Activated CD4-positive, alpha-beta T cell treated with anti-CD3 and anti-CD28 coated beads for 36 hours (primary cell): ENCODE measurements at regions of chr9 and their contacts with region 1.

Region 1: DNA sequence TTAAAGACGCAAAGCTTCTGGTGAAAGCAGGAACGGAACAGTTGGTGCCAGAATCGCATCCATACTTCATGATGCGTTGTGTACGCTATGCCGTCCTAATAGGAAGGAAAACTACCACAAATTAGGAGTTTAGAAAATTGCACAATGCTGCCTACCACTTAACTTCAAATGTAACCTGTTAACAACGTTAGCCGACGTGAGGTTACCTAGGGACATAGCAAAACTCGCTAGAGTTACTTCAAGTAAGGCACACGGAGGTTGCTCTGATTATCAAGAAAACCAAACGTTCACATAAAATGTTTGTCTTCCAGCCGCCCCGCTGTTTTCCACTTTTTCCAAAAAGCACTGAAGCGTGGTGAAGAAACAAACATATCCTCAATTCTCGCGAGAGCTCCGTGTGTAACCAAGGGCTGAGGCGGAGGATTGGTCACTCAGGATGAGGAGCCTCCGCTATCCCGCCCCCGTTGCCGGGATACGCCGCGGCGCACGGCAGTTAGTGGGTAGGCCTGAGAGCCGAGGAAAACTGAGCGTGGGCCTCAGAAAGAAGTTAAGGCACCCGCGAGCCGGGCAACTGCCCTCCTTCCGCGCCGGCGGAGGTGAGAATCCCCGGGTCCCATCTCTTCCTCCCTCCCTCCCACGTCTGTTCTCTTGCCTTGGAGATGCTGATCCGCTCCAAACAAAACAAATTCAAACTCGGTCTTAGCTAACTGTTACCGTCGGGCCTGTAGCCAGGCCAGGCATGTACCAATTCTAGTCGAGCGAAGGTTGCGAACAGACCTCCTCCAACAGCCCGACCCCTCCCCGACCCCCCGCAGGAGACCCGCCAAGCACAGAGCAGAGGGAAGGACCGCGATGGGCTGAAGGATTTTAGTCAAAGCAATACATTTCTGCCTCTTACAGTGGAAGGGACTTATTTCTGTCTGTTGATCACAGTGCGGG is at the start of gene IFT74:
- DNase-seq: peak; percentile 96
- ATAC-seq: peak; percentile 99
- H3K4me3 Mint-ChIP-seq: peak within 1 kb of the TSS; percentile 88
- H3K27ac Mint-ChIP-seq: peak within 1 kb of the TSS; percentile 85
- H3K4me1 Mint-ChIP-seq: peaks cover 32% of the 10 kb centered on the region
- H3K27me3 Mint-ChIP-seq: no peaks in the 10 kb centered on the region
- total RNA-seq, gene IFT74: 10.5 to 11.6 TPM

Region 2: GRCh38 chr9:26919698-26920097 is 36.5 kb before region 1 on chr9:
- CTCF ChIA-PET with region 1: no interaction called
- POLR2A ChIA-PET with region 1: no interaction called
- intact Hi-C with region 1: no loop called
- DNase-seq: no peak
- ATAC-seq: no peak
- H3K4me3 Mint-ChIP-seq: no peak overlapping the region
- H3K27ac Mint-ChIP-seq: no peak overlapping the region
- H3K4me1 Mint-ChIP-seq: no peaks in the 10 kb centered on the region
- H3K27me3 Mint-ChIP-seq: no peaks in the 10 kb centered on the region

Region 3: DNA sequence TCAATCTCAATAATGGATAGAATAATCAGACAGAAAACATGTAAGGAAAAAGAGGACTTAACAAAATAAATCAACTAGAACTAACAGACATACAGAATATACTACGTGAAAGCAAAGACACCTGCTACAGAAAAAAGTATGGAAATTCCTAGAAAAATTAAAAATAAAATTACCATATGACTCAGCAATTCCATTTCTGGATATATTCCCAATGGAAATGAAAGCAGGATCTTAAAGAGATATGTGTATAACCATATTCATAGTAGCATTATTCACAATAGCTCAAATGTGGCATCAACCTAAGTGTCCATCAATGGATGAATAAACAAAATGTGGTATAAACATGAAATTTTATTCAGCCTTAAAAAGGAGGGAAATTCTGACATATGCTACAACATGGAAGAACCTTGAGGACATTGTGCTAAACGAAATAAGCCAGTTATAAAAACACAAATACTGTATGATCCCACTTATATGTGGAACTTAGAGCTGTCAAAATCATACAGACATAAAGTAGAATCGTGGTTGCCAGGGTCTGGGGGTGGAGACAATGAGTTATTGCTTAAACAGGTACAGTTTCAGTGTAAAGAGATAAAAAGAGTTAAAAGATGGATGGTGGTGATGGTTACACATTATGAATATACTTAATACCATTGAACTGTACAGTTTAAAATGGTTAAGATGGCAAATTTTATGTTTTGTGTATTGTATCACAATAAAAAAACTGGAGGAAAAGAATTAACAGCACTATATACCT is 16.1 kb before region 1 on chr9:
- CTCF ChIA-PET with region 1: interaction called, 3 read pairs
- POLR2A ChIA-PET with region 1: no interaction called
- intact Hi-C with region 1: loop called (anchors 2 kb)
- DNase-seq: peak; percentile 28
- ATAC-seq: peak; percentile 70
- H3K4me3 Mint-ChIP-seq: no peak overlapping the region
- H3K27ac Mint-ChIP-seq: peak overlapping the region; percentile 18
- H3K4me1 Mint-ChIP-seq: peaks cover 74% of the 10 kb centered on the region
- H3K27me3 Mint-ChIP-seq: no peaks in the 10 kb centered on the region

Region 4: GRCh38 chr9:27107241-27107640 is 151.1 kb after region 1 on chr9:
- CTCF ChIA-PET with region 1: no interaction called
- POLR2A ChIA-PET with region 1: no interaction called
- intact Hi-C with region 1: no loop called
- DNase-seq: no peak
- ATAC-seq: no peak
- H3K4me3 Mint-ChIP-seq: no peak overlapping the region
- H3K27ac Mint-ChIP-seq: no peak overlapping the region
- H3K4me1 Mint-ChIP-seq: no peaks in the 10 kb centered on the region
- H3K27me3 Mint-ChIP-seq: peaks cover 3% of the 10 kb centered on the region